GM10248 (cell line): ENCODE measurements at regions of chr16 and their contacts with region 1.

Region 1: GRCh38 chr16:17556276-17557052 is 85.7 kb upstream of the XYLT1 start:
- DNase-seq: peak; percentile 39
- CTCF ChIP-seq: peak; percentile 50

Region 2: DNA sequence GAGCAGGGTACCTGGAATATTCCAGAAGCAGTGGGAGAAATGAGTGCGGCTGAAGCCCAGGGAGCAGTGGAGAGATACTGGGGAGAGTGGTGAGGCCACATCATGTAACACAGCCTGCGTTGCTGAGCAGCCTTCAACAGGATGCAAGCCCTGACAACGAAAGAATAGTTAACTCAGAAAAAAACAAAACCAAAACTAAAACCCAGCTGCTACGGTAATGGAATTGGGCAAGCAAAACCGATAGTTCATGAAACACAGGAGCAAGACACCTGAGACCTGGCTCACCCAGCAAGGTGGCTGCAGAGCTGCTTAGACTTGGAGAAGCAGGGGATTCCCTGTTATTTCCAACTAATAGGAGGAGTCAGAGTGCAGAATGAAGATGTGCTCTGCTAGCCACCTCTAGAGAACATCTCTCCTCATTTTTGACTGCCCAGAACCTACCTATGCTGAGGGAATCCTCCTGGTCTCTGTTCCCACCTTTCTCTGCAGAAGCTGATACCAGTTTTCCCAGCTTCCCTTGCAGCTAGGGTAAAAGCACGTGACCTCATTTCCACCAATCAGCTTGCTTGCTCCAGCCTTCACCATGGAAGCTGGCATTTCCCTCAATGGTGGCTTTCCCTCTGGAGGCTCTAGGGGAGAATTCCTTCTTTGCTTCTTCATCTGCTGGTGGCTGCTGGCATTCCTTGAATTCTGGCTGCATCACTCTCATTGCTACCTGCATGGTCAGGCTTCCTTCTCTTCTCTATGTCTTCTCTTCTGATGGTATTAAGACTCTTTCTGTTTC is 26.3 kb before region 1 on chr16:
- CTCF ChIA-PET with region 1: interaction called, 25 read pairs
- POLR2A ChIA-PET with region 1: no interaction called
- DNase-seq: peak; percentile 59
- CTCF ChIP-seq: no peak